AG04449 (cell line): ENCODE measurements at regions of chr10 and their contacts with region 1.

Region 1: GRCh38 chr10:73263948-73264347 is 11.5 kb upstream of the MRPS16 start:
- DNase-seq: no peak
- H3K4me3 ChIP-seq: no peak overlapping the region
- CTCF ChIP-seq: peak; percentile 15

Region 2: DNA sequence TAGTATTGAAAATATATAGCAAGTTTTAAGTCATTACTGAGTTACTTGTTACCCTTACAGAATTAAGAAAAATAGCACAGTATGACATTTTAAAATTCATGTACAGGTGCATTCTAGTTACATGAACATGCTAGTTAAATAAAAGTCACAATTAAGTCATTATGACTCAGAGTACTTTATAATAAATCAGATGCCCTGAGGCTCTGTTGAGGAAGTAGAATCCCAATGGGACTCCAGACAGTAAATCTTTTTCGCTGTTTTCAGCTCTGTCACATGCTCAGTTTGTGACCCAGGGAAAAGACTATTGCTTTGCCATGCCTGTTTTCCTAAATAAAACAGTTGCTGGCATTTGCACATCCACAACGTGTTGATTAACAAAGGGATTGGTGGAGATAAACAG is 132.6 kb before region 1 on chr10:
- CTCF ChIA-PET with region 1: no interaction called
- POLR2A ChIA-PET with region 1: no interaction called
- DNase-seq: no peak
- H3K4me3 ChIP-seq: no peak overlapping the region
- CTCF ChIP-seq: no peak

Region 3: DNA sequence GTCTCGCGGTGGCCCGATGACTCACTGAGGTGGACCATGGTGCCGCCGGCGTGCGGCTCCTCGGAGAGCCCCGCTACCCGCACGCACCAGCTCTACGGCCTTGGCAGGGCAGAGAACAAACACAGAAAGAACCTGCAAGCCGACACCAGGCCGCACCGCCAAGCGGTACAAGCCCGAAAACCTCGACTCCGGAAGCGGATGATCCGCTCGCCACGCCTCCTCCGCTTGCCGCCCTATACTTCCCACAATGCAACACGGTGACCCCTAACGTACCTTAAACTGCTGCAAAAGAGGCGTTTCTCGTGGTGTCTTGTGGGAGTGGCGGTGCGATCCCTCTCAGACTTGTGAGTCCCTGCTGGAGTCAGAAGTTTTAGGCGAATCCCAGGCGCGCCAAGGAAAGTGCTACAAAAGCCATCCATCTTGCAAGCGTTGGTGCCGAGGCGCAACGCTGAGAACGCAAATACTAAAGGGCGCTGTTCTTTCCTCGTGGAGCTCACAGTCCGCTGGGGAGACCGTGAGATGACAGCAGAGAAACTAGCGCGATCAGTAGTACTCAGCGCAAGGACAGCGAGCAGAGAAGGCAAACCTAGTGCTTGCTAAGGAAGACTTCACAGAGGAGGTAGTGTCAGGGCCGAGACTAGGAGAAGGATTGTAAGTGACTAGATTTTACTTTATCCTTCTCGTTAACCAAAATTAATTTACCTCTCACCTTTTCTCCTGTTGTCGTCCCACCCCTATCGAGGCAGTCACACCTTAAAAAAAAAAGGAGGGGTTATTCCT is 11.3 kb before region 1 on chr10 and contains the start of gene MRPS16:
- CTCF ChIA-PET with region 1: interaction called, 14 read pairs
- POLR2A ChIA-PET with region 1: no interaction called
- DNase-seq: peak; percentile 80
- H3K4me3 ChIP-seq: peak within 1 kb of the TSS; percentile 93
- CTCF ChIP-seq: no peak

Region 4: GRCh38 chr10:73281097-73281496 is 17.1 kb after region 1 on chr10:
- CTCF ChIA-PET with region 1: interaction called, 16 read pairs
- POLR2A ChIA-PET with region 1: no interaction called
- DNase-seq: no peak
- H3K4me3 ChIP-seq: no peak overlapping the region
- CTCF ChIP-seq: no peak